Activated CD4-positive, alpha-beta T cell treated with anti-CD3 and anti-CD28 coated beads for 36 hours (primary cell): ENCODE measurements at regions of chr16 and their contacts with region 1.

Region 1: GRCh38 chr16:58629572-58630104 is at the start of gene CNOT1:
- DNase-seq: peak; percentile 99
- ATAC-seq: peak; percentile 89
- H3K4me3 Mint-ChIP-seq: peak within 1 kb of the TSS; percentile 100
- H3K27ac Mint-ChIP-seq: peak within 1 kb of the TSS; percentile 100
- H3K4me1 Mint-ChIP-seq: peaks cover 27% of the 10 kb centered on the region
- H3K27me3 Mint-ChIP-seq: no peaks in the 10 kb centered on the region
- total RNA-seq, gene CNOT1: 265 to 348 TPM

Region 2: DNA sequence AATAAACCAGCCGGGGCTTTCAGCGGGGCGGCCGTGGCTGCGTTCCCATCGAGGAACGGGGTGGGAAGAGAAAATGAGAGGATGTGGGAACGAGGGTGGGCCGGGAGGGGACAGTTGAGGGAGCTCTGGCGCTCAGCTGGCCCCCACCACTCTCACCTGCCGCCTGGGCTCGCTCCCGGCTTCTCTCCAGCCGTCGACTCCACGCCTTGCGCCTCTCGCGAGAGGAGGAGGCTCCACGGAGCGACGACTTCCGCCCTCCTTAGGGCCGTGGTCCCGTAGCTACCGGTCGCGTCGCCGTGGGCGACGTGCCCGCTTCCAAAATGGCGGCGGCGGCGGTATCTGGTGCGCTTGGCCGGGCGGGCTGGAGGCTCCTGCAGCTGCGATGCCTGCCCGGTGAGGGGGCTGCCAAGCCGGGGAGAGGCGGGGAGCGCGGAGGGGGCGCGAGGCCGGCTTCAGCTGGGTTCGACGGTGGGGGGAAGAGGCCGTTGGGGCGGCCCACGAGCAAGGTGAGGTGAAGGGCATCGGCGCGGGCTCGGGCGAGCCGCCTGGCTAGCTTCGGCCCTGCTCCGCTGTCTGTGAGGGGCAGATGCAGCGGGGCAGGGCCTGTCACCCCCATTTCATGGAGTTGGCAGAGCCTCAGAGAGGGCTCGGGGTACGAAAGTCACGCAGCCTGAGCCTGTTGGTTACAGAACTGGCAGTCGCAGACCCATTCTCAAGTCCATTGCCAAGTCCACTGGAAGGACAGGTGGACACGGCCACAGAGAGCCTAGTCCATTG is 1182.3 kb before region 1 on chr16 and contains the starts of genes CIAPIN1 and COQ9:
- CTCF ChIA-PET with region 1: no interaction called
- POLR2A ChIA-PET with region 1: no interaction called
- intact Hi-C with region 1: loop called in 1 of 2 experiments (anchors 10 kb)
- DNase-seq: peak; percentile 96
- ATAC-seq: peak; percentile 99
- H3K4me3 Mint-ChIP-seq: peak within 1 kb of the TSS; percentile 91
- H3K27ac Mint-ChIP-seq: peak within 1 kb of the TSS; percentile 85
- H3K4me1 Mint-ChIP-seq: peaks cover 32% of the 10 kb centered on the region
- H3K27me3 Mint-ChIP-seq: no peaks in the 10 kb centered on the region
- total RNA-seq, gene CIAPIN1: 41.7 to 42.6 TPM
- total RNA-seq, gene COQ9: 39.4 to 52.1 TPM

Region 3: DNA sequence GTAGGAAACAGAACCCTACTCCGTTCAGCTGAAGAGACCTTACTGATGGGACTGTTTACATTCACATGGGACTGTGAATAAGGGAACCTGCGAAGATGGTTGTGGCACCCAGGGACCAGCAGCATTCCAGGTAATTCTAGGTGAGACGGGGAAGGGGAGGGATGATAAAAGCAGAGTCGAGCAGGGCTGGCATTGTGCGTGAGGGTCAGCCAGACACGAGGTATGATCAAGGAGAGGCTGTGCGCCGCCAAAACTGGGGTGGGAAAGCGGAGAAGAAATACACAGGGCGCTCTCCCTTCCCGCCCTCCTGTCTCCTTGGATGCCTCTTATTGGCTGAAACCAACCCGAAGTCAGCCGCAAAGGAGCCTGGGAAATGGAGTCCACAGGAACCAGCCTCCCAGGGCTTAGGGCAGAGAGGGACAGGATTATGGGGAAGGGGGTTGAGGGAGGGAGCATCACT is 393.4 kb before region 1 on chr16:
- CTCF ChIA-PET with region 1: no interaction called
- POLR2A ChIA-PET with region 1: no interaction called
- intact Hi-C with region 1: loop called in 1 of 2 experiments (anchors 1 kb)
- DNase-seq: peak; percentile 82
- ATAC-seq: peak; percentile 99
- H3K4me3 Mint-ChIP-seq: peak overlapping the region; percentile 69
- H3K27ac Mint-ChIP-seq: no peak overlapping the region
- H3K4me1 Mint-ChIP-seq: peaks cover 8% of the 10 kb centered on the region
- H3K27me3 Mint-ChIP-seq: peaks cover 20% of the 10 kb centered on the region

Region 4: GRCh38 chr16:58684354-58685083 is 54.9 kb after region 1 on chr16 and contains the start of gene SLC38A7:
- CTCF ChIA-PET with region 1: no interaction called
- POLR2A ChIA-PET with region 1: interaction called, 7 read pairs
- intact Hi-C with region 1: loop called (anchors 1 kb)
- DNase-seq: peak; percentile 88
- ATAC-seq: peak; percentile 93
- H3K4me3 Mint-ChIP-seq: peak within 1 kb of the TSS; percentile 86
- H3K27ac Mint-ChIP-seq: peak within 1 kb of the TSS; percentile 74
- H3K4me1 Mint-ChIP-seq: peaks cover 19% of the 10 kb centered on the region
- H3K27me3 Mint-ChIP-seq: no peaks in the 10 kb centered on the region
- total RNA-seq, gene SLC38A7: 4.5 to 6.5 TPM

Region 5: DNA sequence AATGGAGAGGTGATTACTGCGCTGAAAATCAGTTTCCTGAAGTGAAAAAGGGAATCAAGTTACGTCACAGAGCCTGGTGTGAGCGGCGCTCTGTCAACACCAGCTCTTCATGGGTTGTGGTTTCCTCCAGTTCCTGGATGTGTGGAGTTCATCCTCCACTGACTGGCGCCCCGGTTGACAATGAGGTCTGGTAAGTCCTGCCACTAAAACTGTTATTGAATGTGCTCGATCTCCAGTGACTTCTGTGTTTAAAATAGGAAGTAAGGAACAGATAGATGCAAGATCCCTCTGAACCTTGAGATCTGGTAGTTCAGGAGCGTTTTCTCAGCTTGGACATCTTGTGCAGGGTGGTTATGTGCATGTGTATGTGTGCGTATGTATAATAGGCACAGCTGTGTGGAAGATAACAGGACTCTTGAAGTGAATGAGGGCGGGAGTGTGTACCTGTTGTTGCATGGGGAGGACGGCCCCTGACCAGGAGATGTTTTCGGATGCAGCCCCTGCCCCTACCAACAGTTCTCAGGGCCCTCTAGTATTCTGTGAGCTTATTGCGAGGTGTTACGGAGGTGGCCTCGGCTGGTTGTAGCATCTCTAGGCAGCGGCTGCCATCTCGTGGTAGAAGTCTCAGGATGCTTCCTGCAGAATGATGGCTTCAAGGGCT is 126.5 kb after region 1 on chr16:
- CTCF ChIA-PET with region 1: interaction called, 3 read pairs
- POLR2A ChIA-PET with region 1: no interaction called
- intact Hi-C with region 1: loop called in 1 of 2 experiments (anchors 1 kb)
- DNase-seq: peak; percentile 90
- ATAC-seq: peak; percentile 97
- H3K4me3 Mint-ChIP-seq: no peak overlapping the region
- H3K27ac Mint-ChIP-seq: no peak overlapping the region
- H3K4me1 Mint-ChIP-seq: peaks cover 7% of the 10 kb centered on the region
- H3K27me3 Mint-ChIP-seq: no peaks in the 10 kb centered on the region